CD4-positive, alpha-beta memory T cell (primary cell): ENCODE measurements at regions of chr9 and their contacts with region 1.

Region 1: GRCh38 chr9:128786681-128787601 is at the start of gene TBC1D13:
- DNase-seq: peak; percentile 90 to 92 (median 90)
- H3K4me3 ChIP-seq: peak within 1 kb of the TSS; percentile 76 to 80
- H3K4me3 Mint-ChIP-seq: peak within 1 kb of the TSS; percentile 87 to 96 (median 90)
- H3K27ac ChIP-seq: peak within 1 kb of the TSS; percentile 72
- H3K27ac Mint-ChIP-seq: peak within 1 kb of the TSS; percentile 90 to 96 (median 96)
- H3K4me1 ChIP-seq: peaks cover 19% of the 10 kb centered on the region
- H3K4me1 Mint-ChIP-seq: peaks cover 11 to 30% (median 16%) of the 10 kb centered on the region in 4 donors
- H3K27me3 ChIP-seq: no peaks in the 10 kb centered on the region
- H3K27me3 Mint-ChIP-seq: no peaks in the 10 kb centered on the region
- total RNA-seq, gene TBC1D13: 28.0 to 31.4 TPM

Region 2: GRCh38 chr9:128688512-128689292 is 98.2 kb before region 1 on chr9 and contains the start of gene SET:
- CTCF ChIA-PET with region 1: no interaction called
- POLR2A ChIA-PET with region 1: interaction called, 3 read pairs
- intact Hi-C with region 1: loop called (anchors 1 kb)
- DNase-seq: peak; percentile 88 to 95 (median 93)
- H3K4me3 ChIP-seq: peak within 1 kb of the TSS; percentile 63 to 88
- H3K4me3 Mint-ChIP-seq: peak within 1 kb of the TSS; percentile 83 to 95 (median 92)
- H3K27ac ChIP-seq: peak within 1 kb of the TSS; percentile 82
- H3K27ac Mint-ChIP-seq: peak within 1 kb of the TSS; percentile 93 to 98 (median 96)
- H3K4me1 ChIP-seq: peaks cover 67% of the 10 kb centered on the region
- H3K4me1 Mint-ChIP-seq: peaks cover 40 to 67% (median 54%) of the 10 kb centered on the region in 4 donors
- H3K27me3 ChIP-seq: no peaks in the 10 kb centered on the region
- H3K27me3 Mint-ChIP-seq: peaks cover 0 to 1% of the 10 kb centered on the region in 2 donors
- total RNA-seq, gene SET: 261 to 264 TPM

Region 3: GRCh38 chr9:128723866-128724743 is 62.8 kb before region 1 on chr9 and contains the start of gene ZDHHC12:
- CTCF ChIA-PET with region 1: interaction called, 3 read pairs
- POLR2A ChIA-PET with region 1: interaction called, 8 read pairs
- intact Hi-C with region 1: loop called (anchors 1 kb)
- DNase-seq: peak; percentile 98 to 99 (median 99)
- H3K4me3 ChIP-seq: peak within 1 kb of the TSS; percentile 89 to 95
- H3K4me3 Mint-ChIP-seq: peak within 1 kb of the TSS; percentile 90 to 94 (median 92)
- H3K27ac ChIP-seq: peak within 1 kb of the TSS; percentile 70
- H3K27ac Mint-ChIP-seq: peak within 1 kb of the TSS; percentile 89 to 97 (median 95)
- H3K4me1 ChIP-seq: peaks cover 28% of the 10 kb centered on the region
- H3K4me1 Mint-ChIP-seq: peaks cover 23 to 45% (median 32%) of the 10 kb centered on the region in 4 donors
- H3K27me3 ChIP-seq: no peaks in the 10 kb centered on the region
- H3K27me3 Mint-ChIP-seq: no peaks in the 10 kb centered on the region
- total RNA-seq, gene ZDHHC12: 24.6 to 25.7 TPM

Region 4: GRCh38 chr9:128829477-128830251 is 42.7 kb after region 1 on chr9 and contains the start of gene SPOUT1:
- CTCF ChIA-PET with region 1: no interaction called
- POLR2A ChIA-PET with region 1: interaction called, 3 read pairs
- intact Hi-C with region 1: loop called (anchors 5 kb)
- DNase-seq: peak; percentile 91 to 94 (median 93)
- H3K4me3 ChIP-seq: peak within 1 kb of the TSS; percentile 71 to 76
- H3K4me3 Mint-ChIP-seq: peak within 1 kb of the TSS; percentile 90 to 99 (median 96)
- H3K27ac ChIP-seq: peak within 1 kb of the TSS; percentile 65
- H3K27ac Mint-ChIP-seq: peak within 1 kb of the TSS; percentile 74 to 98 (median 90)
- H3K4me1 ChIP-seq: peaks cover 22% of the 10 kb centered on the region
- H3K4me1 Mint-ChIP-seq: peaks cover 10 to 31% (median 16%) of the 10 kb centered on the region in 4 donors
- H3K27me3 ChIP-seq: no peaks in the 10 kb centered on the region
- H3K27me3 Mint-ChIP-seq: no peaks in the 10 kb centered on the region
- total RNA-seq, gene SPOUT1: 79.1 to 86.0 TPM

Region 5: GRCh38 chr9:128947422-128948301 is 160.7 kb after region 1 on chr9 and contains the starts of genes DOLK and NUP188:
- CTCF ChIA-PET with region 1: no interaction called
- POLR2A ChIA-PET with region 1: no interaction called
- intact Hi-C with region 1: loop called (anchors 1 kb)
- DNase-seq: peak; percentile 96 to 100 (median 97)
- H3K4me3 ChIP-seq: peak within 1 kb of the TSS; percentile 81 to 90
- H3K4me3 Mint-ChIP-seq: peak within 1 kb of the TSS; percentile 94 to 100 (median 98)
- H3K27ac ChIP-seq: peak within 1 kb of the TSS; percentile 87
- H3K27ac Mint-ChIP-seq: peak within 1 kb of the TSS; percentile 93 to 99 (median 98)
- H3K4me1 ChIP-seq: peaks cover 29% of the 10 kb centered on the region
- H3K4me1 Mint-ChIP-seq: peaks cover 16 to 39% (median 27%) of the 10 kb centered on the region in 4 donors
- H3K27me3 ChIP-seq: no peaks in the 10 kb centered on the region
- H3K27me3 Mint-ChIP-seq: no peaks in the 10 kb centered on the region
- total RNA-seq, gene DOLK: 9.9 to 12.9 TPM
- total RNA-seq, gene NUP188: 70.1 to 70.8 TPM

Region 6: DNA sequence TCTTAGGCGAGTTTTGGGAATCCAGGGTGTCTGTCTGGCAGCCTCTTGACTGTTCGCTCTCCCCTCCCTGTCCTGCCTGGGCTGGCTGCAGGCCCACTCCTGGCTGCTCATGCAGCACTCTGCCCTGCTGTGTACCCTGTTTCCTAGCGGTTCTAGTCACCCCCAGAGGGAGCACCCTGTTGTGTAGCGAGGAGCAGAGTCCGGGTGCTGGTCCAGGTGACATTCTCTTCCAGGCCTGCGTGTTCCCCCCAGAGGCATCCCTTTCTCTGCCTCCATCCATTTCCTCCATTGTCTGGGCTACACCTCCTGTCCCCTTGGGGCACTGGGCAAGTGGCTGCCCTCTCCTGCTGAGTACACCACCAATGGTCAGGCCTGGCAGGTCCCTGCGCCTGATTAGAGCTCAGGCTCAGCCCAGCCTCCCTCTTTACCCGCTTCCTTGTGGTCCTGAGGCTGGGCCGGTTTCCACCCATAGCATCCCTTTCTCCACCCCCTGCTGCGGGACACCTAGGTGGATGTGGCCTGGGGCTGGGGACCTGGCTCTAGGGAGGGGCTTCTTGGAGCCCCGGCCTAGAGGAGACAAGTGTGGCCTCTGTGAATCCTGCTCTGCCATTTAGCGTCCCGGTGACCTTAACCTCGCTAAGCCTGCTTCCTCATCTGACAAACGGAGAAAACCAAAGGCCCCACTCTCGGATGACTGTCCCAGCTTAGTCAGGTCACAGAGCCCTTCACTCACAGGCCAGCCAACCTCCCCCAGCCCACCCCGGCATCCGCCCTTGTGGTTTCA is 306.7 kb after region 1 on chr9:
- CTCF ChIA-PET with region 1: no interaction called
- POLR2A ChIA-PET with region 1: no interaction called
- intact Hi-C with region 1: no loop called
- DNase-seq: peak in 1 of 5 donors; percentile 4
- H3K4me3 ChIP-seq: no peak overlapping the region
- H3K4me3 Mint-ChIP-seq: no peak overlapping the region
- H3K27ac ChIP-seq: no peak overlapping the region
- H3K27ac Mint-ChIP-seq: peak overlapping the region in 2 of 7 donors; percentile 15 to 68
- H3K4me1 ChIP-seq: no peaks in the 10 kb centered on the region
- H3K4me1 Mint-ChIP-seq: no peaks in the 10 kb centered on the region
- H3K27me3 ChIP-seq: no peaks in the 10 kb centered on the region
- H3K27me3 Mint-ChIP-seq: no peaks in the 10 kb centered on the region